HepG2 (cell line): ENCODE measurements at regions of chr1 and their contacts with region 1.

Region 1: DNA sequence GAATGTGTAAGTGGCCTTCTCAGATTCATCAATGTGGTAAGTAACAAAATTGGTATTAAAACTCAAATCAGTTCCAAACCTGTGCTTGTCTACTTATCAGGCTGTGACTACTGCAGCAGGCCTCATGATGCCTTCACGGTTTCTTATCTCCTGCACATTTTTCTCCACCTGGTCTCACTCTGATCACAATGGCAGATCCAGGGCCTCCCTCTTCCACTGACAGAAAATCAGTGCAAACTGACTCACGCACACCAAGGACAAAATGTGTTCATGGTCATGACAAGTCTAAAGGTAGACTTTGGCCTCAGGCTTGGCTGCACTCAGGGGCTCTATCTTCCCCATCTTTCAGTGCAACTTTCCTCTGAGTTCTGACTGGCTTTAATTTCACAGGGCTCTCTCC is 56.7 kb upstream of the ATP1A1 start:
- DNase-seq: peak; percentile 81
- ATAC-seq: peak; percentile 73
- H3K4me3 ChIP-seq: no peak overlapping the region
- H3K27ac ChIP-seq: peak overlapping the region; percentile 4
- H3K4me1 ChIP-seq: peaks cover 82% of the 10 kb centered on the region
- H3K27me3 ChIP-seq: no peaks in the 10 kb centered on the region
- CTCF ChIP-seq: no peak
- EP300 ChIP-seq: peak in 1 of 2 experiments; percentile 71; a peak in 2 of 4 replicates
- POLR2A ChIP-seq: no peak
- RAD21 ChIP-seq: no peak

Region 2: GRCh38 chr1:116292929-116293725 is 23.2 kb before region 1 on chr1:
- CTCF ChIA-PET with region 1: no interaction called
- POLR2A ChIA-PET with region 1: no interaction called
- in situ Hi-C with region 1: no loop called
- intact Hi-C with region 1: loop called (anchors 1 kb)
- DNase-seq: peak; percentile 91
- ATAC-seq: peak; percentile 96
- H3K4me3 ChIP-seq: no peak overlapping the region
- H3K27ac ChIP-seq: no peak overlapping the region
- H3K4me1 ChIP-seq: peaks cover 61% of the 10 kb centered on the region
- H3K27me3 ChIP-seq: peaks cover 0 to 39% of the 10 kb centered on the region in 2 experiments; a peak in 4 of 5 replicates
- CTCF ChIP-seq: no peak
- EP300 ChIP-seq: peak in 1 of 2 experiments; percentile 85; a peak in 2 of 4 replicates
- POLR2A ChIP-seq: no peak
- RAD21 ChIP-seq: no peak